HEK293 (cell line): ENCODE measurements at regions of chr2 and their contacts with region 1.

Region 1: DNA sequence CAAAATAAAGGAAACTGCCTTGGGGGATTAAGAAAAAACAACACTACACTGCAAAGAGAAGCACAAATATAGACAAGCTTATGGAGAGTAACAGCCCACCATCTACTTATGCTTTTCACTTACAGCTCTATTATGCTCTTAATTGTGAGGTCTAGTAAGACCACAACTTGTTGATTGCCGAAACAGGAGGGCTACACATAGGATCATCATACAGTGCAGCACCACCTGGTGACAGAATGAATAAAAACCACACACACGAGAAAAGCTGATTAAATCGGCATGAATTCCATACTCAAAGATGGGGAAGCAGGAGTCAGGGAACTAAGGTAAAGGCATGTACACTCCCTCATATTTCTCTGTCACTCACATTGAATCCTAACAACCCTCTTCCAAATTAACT is 259.2 kb downstream of the IKZF2 start:
- H3K4me3 ChIP-seq: no peak overlapping the region
- H3K27ac ChIP-seq: no peak overlapping the region
- H3K4me1 ChIP-seq: no peaks in the 10 kb centered on the region
- CTCF ChIP-seq: peak; percentile 27; the same call in 1 of the 2 replicates

Region 2: DNA sequence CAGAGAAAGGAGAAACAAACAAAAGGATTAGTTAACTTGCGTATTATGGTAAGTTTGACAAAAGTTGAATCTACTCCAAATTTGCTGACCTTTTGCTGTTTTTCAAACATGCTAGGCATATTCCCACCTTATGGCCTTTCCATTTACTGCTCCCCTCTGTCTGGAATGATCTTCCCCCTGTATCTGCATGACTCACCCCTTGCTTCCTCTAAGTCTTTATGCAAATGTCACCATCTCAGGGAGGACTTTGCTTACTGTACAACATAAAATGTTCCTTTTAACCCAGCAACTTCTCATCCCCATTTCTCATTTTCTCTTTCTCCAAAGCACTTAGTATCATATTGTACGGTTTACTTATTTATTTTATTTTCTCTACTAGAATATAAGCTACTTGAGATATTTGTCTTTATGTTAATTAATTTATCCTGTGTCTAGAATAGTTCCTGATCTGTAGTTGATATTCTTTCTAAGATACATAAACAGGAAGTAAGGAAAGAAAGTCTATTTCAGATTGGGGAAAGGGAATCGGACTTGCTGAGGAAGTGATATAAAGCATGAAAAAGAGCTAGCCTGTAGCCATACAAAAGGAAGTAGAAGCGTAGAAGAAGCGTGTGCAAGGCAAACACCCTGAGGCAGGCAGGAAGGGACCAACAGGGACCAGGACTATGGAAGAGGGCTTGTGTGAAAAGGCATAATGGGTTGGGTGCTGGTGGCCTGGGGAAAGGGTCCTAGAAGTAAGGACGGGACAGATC is 208.7 kb before region 1 on chr2:
- CTCF ChIA-PET with region 1: interaction called, 12 read pairs
- POLR2A ChIA-PET with region 1: no interaction called
- H3K4me3 ChIP-seq: no peak overlapping the region
- H3K27ac ChIP-seq: no peak overlapping the region
- H3K4me1 ChIP-seq: no peaks in the 10 kb centered on the region
- CTCF ChIP-seq: no peak

Region 3: GRCh38 chr2:212931271-212931670 is 39.1 kb after region 1 on chr2:
- CTCF ChIA-PET with region 1: no interaction called
- POLR2A ChIA-PET with region 1: no interaction called
- H3K4me3 ChIP-seq: no peak overlapping the region
- H3K27ac ChIP-seq: no peak overlapping the region
- H3K4me1 ChIP-seq: no peaks in the 10 kb centered on the region
- CTCF ChIP-seq: no peak

Region 4: DNA sequence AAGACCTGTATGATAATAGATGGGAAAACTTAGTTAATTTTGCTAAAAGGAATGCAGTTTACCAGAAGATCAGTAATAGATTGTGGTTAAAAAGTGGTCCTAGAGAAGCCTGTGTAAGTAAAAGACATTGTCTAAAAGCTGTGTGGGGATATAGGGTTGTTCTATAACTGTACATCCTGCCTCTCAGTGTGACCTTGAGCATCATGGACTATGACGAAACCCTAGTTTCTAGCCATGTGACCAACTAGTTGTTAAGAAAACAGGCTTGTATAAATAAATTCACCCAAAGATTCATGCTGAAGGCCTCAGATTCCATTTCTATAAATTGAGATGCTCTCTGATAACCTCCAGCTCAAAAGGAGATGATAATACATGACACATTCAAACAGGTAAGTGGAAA is 98.5 kb after region 1 on chr2:
- CTCF ChIA-PET with region 1: no interaction called
- POLR2A ChIA-PET with region 1: no interaction called
- H3K4me3 ChIP-seq: no peak overlapping the region
- H3K27ac ChIP-seq: no peak overlapping the region
- H3K4me1 ChIP-seq: no peaks in the 10 kb centered on the region
- CTCF ChIP-seq: no peak